Activated CD8-positive, alpha-beta T cell treated with anti-CD3 and anti-CD28 coated beads, Interleukin-2, amount 10 ng/mL, durations not matched to agents 7 days and 5 days (primary cell): ENCODE measurements at regions of chr5 and their contacts with region 1.

Region 1: GRCh38 chr5:141701360-141702119 is 19.5 kb upstream of the ARAP3 start:
- DNase-seq: no peak
- ATAC-seq: peak; percentile 25
- H3K4me3 Mint-ChIP-seq: peak overlapping the region; percentile 71
- H3K27ac Mint-ChIP-seq: no peak overlapping the region
- H3K4me1 Mint-ChIP-seq: peaks cover 17% of the 10 kb centered on the region
- H3K27me3 Mint-ChIP-seq: peaks cover 46% of the 10 kb centered on the region

Region 2: GRCh38 chr5:141475625-141476131 is 225.9 kb before region 1 on chr5 and contains the start of gene PCDHGC3:
- CTCF ChIA-PET with region 1: no interaction called
- POLR2A ChIA-PET with region 1: no interaction called
- DNase-seq: no peak
- ATAC-seq: peak; percentile 60
- H3K4me3 Mint-ChIP-seq: peak within 1 kb of the TSS; percentile 62
- H3K27ac Mint-ChIP-seq: no peak within 1 kb of the TSS
- H3K4me1 Mint-ChIP-seq: peaks cover 29% of the 10 kb centered on the region
- H3K27me3 Mint-ChIP-seq: peaks cover 64% of the 10 kb centered on the region
- total RNA-seq, gene PCDHGC3: not detected

Region 3: DNA sequence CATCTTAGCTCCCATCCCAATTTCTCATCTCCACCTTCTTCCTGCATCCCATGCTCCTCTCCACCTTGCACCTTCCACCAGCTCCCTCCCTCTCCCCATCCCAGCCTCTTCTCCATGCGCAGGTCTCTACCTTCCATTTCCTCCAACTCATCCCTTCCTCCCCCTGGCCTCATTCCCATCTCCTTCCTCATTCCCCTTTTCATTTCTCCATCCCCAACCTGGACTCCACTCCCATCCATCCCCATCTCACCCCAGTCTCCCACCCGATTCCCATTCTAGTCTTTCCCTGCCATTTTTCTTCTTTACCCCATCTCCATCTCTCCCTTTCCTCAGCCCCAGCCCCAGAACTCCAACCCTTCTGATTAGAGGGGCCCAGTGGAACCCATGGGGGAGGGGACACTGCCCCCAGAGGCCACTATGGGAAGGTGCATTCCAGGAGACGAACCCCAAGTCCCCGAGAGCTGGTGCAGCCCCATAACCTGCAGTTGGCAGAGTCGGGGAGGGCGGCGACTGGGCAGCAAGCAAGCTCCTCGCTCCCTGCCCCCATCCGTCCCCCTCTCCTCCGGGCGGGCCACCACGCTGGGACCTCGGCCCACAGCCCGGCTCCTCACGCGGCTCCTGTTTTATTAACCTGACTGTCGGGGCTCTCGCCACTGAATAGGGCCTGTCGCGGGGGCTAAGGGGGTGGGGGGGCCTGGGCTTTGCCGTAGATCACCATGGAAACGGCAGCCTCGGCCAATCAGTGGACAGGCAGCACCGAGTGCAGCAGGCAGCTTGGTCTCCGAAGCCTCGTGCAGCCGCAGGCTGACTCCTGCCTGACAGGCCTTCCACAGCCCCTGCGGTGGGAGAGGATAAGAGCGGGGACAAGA is 110.0 kb after region 1 on chr5:
- CTCF ChIA-PET with region 1: interaction called, 11 read pairs
- POLR2A ChIA-PET with region 1: no interaction called
- DNase-seq: peak; percentile 49
- ATAC-seq: peak; percentile 80
- H3K4me3 Mint-ChIP-seq: no peak overlapping the region
- H3K27ac Mint-ChIP-seq: no peak overlapping the region
- H3K4me1 Mint-ChIP-seq: peaks cover 10% of the 10 kb centered on the region
- H3K27me3 Mint-ChIP-seq: peaks cover 39% of the 10 kb centered on the region

Region 4: GRCh38 chr5:141914199-141914743 is 212.7 kb after region 1 on chr5:
- CTCF ChIA-PET with region 1: interaction called, 10 read pairs
- POLR2A ChIA-PET with region 1: no interaction called
- DNase-seq: no peak
- ATAC-seq: peak; percentile 88
- H3K4me3 Mint-ChIP-seq: peak overlapping the region; percentile 14
- H3K27ac Mint-ChIP-seq: no peak overlapping the region
- H3K4me1 Mint-ChIP-seq: peaks cover 8% of the 10 kb centered on the region
- H3K27me3 Mint-ChIP-seq: peaks cover 47% of the 10 kb centered on the region